Prostate gland (tissue), 2 donors: ENCODE measurements at regions of chr20 and their contacts with region 1.

Region 1: GRCh38 chr20:11676630-11677284 is 240.9 kb upstream of the BTBD3 start:
- DNase-seq: no peak
- H3K4me3 ChIP-seq: no peak overlapping the region
- H3K27ac ChIP-seq: no peak overlapping the region
- H3K4me1 ChIP-seq: no peaks in the 10 kb centered on the region
- H3K27me3 ChIP-seq: no peaks in the 10 kb centered on the region
- CTCF ChIP-seq: peak; percentile 21 to 62 (median 34)
- POLR2A ChIP-seq: no peak

Region 2: DNA sequence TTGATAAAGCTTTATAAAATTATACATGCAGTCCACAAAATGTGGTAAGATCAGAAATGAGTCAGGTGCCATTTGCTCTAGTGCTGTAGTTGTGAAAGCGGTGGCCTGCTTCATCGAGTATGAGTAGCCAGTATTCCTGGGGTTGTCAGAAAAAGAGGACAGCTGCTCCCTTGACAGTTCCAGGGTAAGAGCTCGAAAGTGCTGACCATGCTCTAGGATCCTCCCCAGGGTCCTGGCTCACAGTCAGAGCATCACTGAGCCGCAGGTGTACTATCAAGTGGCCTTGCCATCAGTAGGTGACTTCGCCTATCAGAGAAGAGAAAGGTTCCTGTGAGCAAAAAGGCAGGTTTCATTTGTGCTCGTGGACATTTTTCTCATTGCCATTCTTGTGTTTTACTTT is 244.6 kb after region 1 on chr20:
- intact Hi-C with region 1: loop called (anchors 10 kb)
- DNase-seq: no peak
- H3K4me3 ChIP-seq: no peak overlapping the region
- H3K27ac ChIP-seq: no peak overlapping the region
- H3K4me1 ChIP-seq: peaks cover 4% of the 10 kb centered on the region
- H3K27me3 ChIP-seq: no peaks in the 10 kb centered on the region
- CTCF ChIP-seq: no peak
- POLR2A ChIP-seq: no peak